ENCODE measurements at regions of chr15 and their contacts with region 1.

Region 1: DNA sequence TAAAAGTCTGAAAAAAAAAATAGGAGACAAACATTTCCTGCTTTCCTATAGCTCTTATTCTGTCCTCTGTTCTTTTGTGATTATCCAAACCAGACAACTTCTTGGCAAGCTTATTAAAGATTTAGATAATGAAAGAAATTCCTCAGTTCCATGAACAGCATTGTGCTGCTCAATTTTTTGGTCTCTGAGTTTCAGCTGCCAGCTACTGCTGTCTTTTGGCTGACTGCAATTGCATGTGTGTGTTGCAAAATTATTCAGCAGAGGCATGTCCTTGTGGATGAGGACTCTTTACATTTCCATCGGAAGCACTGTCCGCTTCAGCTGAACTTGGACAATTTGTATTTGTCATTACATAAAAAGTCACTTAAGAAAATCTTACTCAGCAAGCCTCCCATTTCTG is 397.3 kb upstream of the RASGRP1 start:
- DNase-seq: no peak
- ATAC-seq: no peak
- H3K4me3 ChIP-seq: no peak overlapping the region
- H3K4me3 Mint-ChIP-seq: no peak overlapping the region
- H3K27ac ChIP-seq: no peak overlapping the region
- H3K27ac Mint-ChIP-seq: no peak overlapping the region
- H3K4me1 ChIP-seq: no peaks in the 10 kb centered on the region
- H3K4me1 Mint-ChIP-seq: no peaks in the 10 kb centered on the region
- H3K27me3 ChIP-seq: no peaks in the 10 kb centered on the region
- H3K27me3 Mint-ChIP-seq: peaks cover 6% of the 10 kb centered on the region
- CTCF ChIP-seq: no peak

Region 2: GRCh38 chr15:38905634-38906033 is 56.3 kb before region 1 on chr15:
- CTCF ChIA-PET with region 1: no interaction called
- POLR2A ChIA-PET with region 1: no interaction called
- intact Hi-C with region 1: loop called in 1 of 2 experiments (anchors 10 kb)
- DNase-seq: no peak
- ATAC-seq: no peak
- H3K4me3 ChIP-seq: no peak overlapping the region
- H3K4me3 Mint-ChIP-seq: no peak overlapping the region
- H3K27ac ChIP-seq: no peak overlapping the region
- H3K27ac Mint-ChIP-seq: no peak overlapping the region
- H3K4me1 ChIP-seq: no peaks in the 10 kb centered on the region
- H3K4me1 Mint-ChIP-seq: no peaks in the 10 kb centered on the region
- H3K27me3 ChIP-seq: no peaks in the 10 kb centered on the region
- H3K27me3 Mint-ChIP-seq: peaks cover 10% of the 10 kb centered on the region
- CTCF ChIP-seq: no peak